Cardiac septum (tissue), 1 donor: ENCODE measurements at regions of chr3 and their contacts with region 1.

Region 1: GRCh38 chr3:64685800-64686445 is 1.9 kb downstream of the ADAMTS9 start:
- DNase-seq: peak; percentile 95

Region 2: DNA sequence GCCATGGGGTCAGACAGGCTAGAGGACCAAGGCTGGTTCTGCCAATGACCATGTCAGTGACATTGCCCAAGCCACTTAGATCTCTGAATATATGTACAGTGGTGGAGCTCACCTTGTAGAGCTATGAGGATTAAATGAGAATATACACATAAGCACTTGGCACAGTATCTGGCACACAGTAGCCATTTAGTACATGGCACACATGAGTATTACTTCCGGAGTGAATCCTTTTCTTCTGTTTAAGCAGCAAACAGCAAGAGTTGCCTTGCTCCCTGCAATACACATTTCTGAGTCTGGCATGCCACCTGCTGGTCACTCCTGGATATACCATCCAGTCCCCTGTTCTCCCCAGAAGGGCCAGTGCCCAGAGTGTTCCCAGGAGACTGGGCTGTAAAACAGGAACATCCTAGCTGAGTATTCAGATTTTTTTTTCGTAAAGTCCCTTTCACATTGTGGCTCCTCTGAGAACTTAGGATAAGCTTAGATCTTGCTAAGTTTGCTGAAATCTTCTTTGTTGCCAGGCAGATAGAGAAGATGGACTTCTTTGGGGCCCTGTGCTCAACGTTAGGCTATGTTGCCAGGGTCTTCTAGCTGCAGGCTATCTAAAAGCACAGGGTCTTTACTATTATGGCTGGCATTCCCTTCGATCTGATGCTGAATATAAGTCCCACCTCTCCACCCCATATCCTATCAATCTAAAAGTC is 201.5 kb before region 1 on chr3:
- intact Hi-C with region 1: no loop called
- DNase-seq: peak; percentile 84

Region 3: GRCh38 chr3:64617610-64618009 is 68.3 kb before region 1 on chr3:
- intact Hi-C with region 1: loop called (anchors 2 kb)
- DNase-seq: no peak

Region 4: DNA sequence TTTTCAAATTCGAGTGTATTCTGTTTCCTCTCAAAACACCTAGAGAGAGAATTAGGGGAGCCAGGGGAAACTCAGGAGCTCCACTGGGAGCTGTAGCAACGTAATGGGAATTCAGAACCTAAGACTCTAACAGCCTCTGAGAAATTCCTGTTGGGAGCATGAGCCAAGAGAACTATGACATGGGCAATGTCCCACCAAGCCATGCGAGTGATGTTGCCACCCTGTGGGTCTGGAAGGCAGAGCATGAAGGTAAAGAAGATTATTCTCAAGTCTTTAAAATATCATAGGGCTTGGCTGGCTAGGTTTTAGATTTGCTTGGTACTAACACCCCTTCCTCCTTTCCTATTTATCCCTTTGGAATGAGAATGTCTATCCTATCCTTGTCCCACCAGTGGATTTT is 394.5 kb after region 1 on chr3:
- intact Hi-C with region 1: loop called (anchors 5 kb)
- DNase-seq: no peak

Region 5: DNA sequence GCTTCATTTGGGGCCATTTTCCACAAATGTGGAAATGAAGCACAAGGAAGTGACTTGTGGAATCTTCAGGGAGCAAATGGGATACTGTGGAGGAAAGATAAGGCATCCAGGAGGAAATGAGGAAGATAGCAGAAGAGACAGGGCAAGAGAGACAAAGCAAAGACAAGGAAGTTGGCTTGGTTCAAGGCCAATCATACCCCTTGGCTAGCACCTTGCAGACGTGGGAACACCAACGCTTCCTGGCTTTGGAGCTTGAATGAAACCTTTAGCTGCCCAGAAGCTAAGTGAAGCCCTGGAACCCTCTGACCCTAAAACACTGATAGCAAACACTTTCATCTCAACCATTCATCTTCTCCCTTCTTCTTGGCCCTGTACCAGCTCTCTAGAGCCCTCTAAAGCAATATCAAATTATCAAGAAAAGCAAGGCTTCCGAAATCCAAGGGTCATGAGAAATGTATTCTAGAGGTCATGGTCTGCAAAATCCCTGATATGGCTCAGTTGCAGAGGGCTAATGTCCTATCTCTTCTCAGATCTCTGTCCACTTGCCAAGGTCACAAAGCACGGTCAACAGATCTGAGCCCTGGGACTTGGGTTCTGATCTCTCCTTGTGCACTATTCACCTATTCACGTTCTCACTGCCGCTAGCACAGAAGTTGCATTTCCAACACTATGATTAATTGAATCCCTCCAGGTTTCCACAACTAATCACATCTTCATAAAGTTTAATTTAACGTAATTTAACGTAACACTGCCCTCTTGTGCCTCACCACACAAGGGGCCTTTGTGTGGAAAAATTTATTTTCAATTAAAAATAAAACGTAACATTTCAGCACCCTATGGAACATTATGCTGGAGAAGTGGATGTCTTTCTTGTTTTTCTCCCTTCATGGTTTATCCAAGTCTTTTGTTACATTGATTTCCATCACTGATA is 559.5 kb after region 1 on chr3:
- intact Hi-C with region 1: loop called (anchors 10 kb)
- DNase-seq: no peak